ENCODE measurements at regions of chr6 and their contacts with region 1.

Region 1: GRCh38 chr6:55276745-55277530 is 50.3 kb upstream of the GFRAL start:
- DNase-seq: no peak

Region 2: DNA sequence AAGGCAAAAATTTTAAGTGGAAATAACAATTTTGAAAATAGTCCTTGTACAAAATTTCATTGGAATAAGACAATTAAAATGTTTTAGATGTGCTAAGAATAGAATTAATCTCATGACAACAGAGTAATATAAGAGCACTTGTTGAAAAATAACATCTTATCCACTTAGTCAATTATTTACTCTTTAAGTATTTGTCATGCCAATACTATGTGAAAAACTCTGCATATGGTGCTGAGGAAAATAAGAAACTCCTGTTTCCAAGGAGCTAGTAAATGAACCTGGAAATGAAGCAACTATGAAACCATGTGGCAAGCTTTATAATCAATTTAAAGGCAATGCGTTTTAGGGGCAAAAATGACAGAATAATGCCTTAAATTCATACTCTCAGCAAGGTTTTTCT is 145.3 kb before region 1 on chr6:
- intact Hi-C with region 1: no loop called
- DNase-seq: no peak

Region 3: GRCh38 chr6:55327169-55327568 is 50.2 kb after region 1 on chr6 and contains the start of gene GFRAL:
- intact Hi-C with region 1: no loop called
- DNase-seq: no peak
- total RNA-seq, gene GFRAL: not detected

Region 4: DNA sequence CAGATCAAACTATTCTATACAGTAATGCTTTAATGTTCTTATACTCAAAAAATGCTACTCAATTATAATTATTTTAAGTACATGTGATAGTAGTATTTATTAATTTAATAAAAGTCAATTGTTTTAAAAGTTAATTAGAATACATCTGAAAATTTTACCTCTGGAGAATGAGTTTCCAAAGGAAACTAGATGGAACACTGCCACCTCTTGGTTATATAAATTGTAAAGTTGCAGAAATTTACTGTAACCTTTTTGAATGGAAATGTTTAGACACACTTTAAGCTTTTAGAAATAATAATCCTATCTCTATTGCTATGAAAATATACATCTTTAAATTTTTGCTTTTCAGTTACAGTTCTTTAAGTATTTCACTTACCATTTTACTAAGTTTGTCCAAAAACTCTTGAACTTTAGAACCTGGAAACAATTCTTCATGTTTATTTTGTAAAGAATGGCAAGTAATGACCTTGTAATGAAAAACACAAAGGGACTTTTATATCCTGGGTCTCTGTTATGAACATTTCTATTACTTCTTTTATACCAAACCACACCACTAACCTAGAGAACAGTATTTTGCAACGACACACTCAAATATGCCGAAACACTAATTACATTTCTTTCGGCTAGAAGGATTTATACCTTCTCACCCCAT is 609.4 kb after region 1 on chr6:
- intact Hi-C with region 1: loop called (anchors 10 kb)
- DNase-seq: no peak

Region 5: DNA sequence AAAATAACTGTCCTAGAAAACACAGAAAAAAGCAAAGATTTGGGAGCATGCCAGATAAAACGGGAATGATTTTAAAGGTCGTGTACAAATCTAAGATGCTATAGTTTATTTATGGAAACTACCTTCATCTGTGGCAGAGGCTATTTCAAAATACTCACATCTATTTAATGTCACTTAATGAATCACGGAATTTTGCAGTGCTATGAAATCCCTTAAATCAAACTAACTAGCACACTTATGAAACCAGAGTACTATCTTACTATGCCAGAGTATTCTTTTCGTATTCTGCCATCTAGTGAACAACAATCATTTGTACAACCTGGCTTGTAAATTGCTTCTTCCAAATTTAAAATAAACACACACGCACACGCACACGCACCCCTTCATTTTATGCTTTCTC is 676.4 kb after region 1 on chr6:
- intact Hi-C with region 1: loop called (anchors 10 kb)
- DNase-seq: no peak

Measured in cardiac septum (tissue), 1 donor.